Vagina (tissue), 2 donors: ENCODE measurements at regions of chr12 and their contacts with region 1.

Region 1: DNA sequence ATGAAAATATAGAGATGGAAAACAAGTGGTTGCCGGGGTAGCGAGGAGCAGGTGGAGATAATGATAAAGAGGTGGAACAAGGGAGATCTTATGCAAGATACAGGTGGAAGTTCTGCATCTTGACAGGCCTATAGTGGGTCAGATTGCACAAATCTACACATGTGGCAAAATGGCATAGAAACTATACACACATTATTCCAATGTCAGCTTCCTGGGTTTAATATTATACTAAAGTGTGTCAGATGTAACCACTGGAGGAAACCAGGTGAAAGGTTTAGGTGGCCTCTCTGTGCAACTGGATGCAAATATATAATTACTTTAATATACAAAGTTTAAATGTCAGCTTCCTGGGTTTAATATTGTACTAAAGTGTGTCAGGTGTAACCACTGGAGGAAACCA is 1.1 kb downstream of the SLC38A4 start:
- DNase-seq: no peak
- H3K4me3 ChIP-seq: no peak overlapping the region
- H3K27ac ChIP-seq: no peak overlapping the region
- H3K4me1 ChIP-seq: peaks cover 5% of the 10 kb centered on the region
- H3K27me3 ChIP-seq: no peaks in the 10 kb centered on the region
- CTCF ChIP-seq: no peak
- POLR2A ChIP-seq: no peak

Region 2: DNA sequence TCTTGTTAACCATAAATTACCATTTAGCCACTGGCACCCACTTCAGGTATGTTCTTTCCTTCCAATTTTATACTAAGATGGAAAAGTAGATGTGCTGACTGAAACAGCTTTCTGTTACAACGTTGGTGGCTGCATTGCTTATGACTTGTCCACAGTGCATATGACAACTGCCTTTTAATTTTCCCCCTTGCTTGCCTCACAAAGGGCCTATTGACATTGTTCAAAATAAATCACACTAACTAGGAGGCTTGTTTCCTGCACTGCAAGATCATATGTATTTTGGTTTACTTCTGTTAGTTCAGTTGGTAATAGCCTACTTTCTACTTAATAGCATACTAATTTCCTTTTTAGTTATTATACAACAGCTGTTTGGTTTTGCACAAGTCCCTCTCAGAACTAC is 889.8 kb before region 1 on chr12:
- intact Hi-C with region 1: loop called (anchors 5 kb)
- DNase-seq: no peak
- H3K4me3 ChIP-seq: no peak overlapping the region
- H3K27ac ChIP-seq: no peak overlapping the region
- H3K4me1 ChIP-seq: no peaks in the 10 kb centered on the region
- H3K27me3 ChIP-seq: no peaks in the 10 kb centered on the region
- CTCF ChIP-seq: no peak
- POLR2A ChIP-seq: no peak

Region 3: DNA sequence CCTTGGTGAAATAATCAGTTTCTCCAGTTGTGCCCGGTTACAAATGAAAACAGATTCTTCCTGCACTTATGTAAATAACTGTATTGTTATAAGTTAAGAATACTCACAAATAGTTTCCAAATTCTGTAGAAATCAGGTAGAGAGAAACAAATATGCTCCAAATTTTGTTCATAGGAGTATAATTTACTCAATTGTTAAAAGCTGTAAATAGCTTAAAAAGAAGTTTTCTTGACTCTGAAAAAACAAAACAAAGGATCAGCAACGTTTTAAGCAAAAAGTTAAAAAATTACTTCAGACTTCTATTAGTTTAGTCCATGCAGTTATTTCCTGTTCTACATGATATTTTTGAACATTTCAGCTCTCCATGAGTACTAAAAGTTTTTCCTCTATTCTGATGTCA is 31.1 kb after region 1 on chr12:
- intact Hi-C with region 1: no loop called
- DNase-seq: no peak
- H3K4me3 ChIP-seq: no peak overlapping the region
- H3K27ac ChIP-seq: no peak overlapping the region
- H3K4me1 ChIP-seq: no peaks in the 10 kb centered on the region
- H3K27me3 ChIP-seq: no peaks in the 10 kb centered on the region
- CTCF ChIP-seq: no peak
- POLR2A ChIP-seq: no peak